ENCODE measurements at regions of chr6 and their contacts with region 1.

Region 1: DNA sequence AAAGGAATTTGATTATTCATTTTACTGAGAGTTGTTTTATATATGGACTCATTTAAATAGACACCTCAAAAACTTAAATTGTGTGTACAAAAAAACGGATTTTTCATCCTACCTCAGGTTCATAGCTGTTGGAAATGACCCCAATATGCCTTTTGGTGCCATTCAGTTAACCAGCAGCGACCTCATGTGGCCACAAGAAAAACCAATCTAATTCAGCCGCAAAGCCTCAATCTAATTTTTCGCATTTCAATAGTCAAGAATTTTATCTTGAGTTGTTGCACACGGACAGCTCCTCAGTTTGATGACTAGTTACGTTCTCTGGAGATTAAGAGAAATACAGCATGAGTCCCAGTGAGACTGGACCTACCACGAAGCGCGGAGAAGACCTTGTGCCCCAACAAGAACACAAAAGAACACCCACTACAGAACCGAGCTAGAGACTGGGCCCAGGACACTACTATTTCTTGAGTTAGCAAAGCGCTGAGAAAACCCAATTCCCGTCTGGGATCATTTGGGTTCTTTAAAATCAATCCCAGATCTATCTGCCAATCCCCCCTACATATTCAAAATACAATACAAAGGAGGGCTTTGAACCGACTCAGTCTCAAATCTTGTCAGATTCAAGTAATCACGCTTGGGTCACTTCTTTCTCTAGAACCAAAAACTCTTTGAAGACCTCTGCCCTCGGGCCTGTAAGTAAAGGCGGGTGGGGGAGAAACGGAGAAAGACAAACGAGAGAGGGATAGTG is 1.1 kb downstream of the TCP11 start:
- DNase-seq: peak; percentile 40 to 57
- H3K4me3 ChIP-seq: no peak overlapping the region
- H3K27ac ChIP-seq: no peak overlapping the region
- H3K4me1 ChIP-seq: no peaks in the 10 kb centered on the region
- H3K27me3 ChIP-seq: no peaks in the 10 kb centered on the region
- CTCF ChIP-seq: peak; percentile 78 to 91 (median 84)
- POLR2A ChIP-seq: no peak

Region 2: GRCh38 chr6:34897130-34897529 is 243.0 kb before region 1 on chr6:
- intact Hi-C with region 1: no loop called
- DNase-seq: no peak
- H3K4me3 ChIP-seq: no peak overlapping the region
- H3K27ac ChIP-seq: no peak overlapping the region
- H3K4me1 ChIP-seq: no peaks in the 10 kb centered on the region
- H3K27me3 ChIP-seq: no peaks in the 10 kb centered on the region
- CTCF ChIP-seq: no peak
- POLR2A ChIP-seq: no peak

Region 3: DNA sequence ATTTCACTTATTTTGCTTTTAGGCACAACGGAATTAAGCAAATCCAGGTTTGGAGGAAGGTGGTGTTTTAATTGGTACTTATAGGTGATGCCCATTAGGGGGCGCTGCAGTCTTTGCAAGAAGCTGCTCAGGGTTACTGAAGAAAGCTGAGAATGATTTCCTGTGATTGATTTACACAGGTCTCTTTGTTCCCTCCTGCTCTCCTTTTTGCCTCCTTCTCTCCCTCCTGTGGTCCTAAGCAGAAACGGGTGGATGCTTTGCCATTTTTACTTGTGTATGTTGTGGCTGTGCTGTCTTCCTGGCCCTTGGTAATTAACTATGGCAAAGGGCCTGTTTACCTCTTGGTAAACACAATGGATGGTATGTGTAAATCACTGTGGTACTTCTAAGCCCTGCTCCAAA is 153.2 kb before region 1 on chr6:
- intact Hi-C with region 1: loop called (anchors 10 kb)
- DNase-seq: peak; percentile 35 to 63
- H3K4me3 ChIP-seq: no peak overlapping the region
- H3K27ac ChIP-seq: no peak overlapping the region
- H3K4me1 ChIP-seq: no peaks in the 10 kb centered on the region
- H3K27me3 ChIP-seq: no peaks in the 10 kb centered on the region
- CTCF ChIP-seq: peak; percentile 70 to 85 (median 77)
- POLR2A ChIP-seq: no peak

Region 4: GRCh38 chr6:35359751-35360348 is 219.8 kb after region 1 on chr6:
- intact Hi-C with region 1: no loop called
- DNase-seq: no peak
- H3K4me3 ChIP-seq: no peak overlapping the region
- H3K27ac ChIP-seq: no peak overlapping the region
- H3K4me1 ChIP-seq: no peaks in the 10 kb centered on the region
- H3K27me3 ChIP-seq: no peaks in the 10 kb centered on the region
- CTCF ChIP-seq: no peak
- POLR2A ChIP-seq: no peak